Gastrocnemius medialis (tissue), 4 donors: ENCODE measurements at regions of chr17 and their contacts with region 1.

Region 1: DNA sequence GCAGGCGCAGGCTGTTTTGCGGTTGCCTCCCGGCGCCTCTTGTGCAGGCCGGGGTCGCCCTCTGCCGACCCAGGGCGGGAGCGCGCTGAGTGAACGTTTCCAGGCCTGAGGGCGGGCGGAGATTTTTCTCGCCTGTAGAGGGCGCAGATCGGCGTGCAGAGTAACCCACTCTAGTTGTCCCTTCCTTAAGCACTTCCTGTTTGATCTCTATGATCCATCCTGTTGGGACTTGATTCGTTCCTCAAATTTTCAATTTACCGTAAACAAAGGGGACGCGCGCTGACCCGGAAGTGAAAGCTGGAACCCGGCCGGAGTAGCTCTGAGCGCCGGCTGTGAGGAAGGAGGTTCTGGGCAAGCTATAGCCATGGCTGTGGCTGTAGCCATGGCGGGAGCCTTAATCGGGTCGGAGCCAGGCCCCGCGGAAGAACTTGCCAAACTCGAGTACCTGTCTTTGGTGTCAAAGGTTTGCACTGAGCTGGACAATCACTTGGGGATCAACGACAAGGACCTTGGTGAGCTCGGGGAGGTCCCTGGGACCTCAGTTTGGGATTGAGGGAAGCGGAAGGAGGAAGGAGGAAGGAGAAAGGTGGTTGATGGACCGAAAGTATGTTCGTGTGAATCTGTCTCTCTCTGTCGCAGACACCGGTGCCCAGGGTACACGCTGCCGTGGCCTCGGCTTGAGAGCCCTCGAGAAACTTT is at the start of gene DHX8:
- DNase-seq: peak; percentile 96
- ATAC-seq: peak; percentile 98 to 99
- H3K4me3 ChIP-seq: peak within 1 kb of the TSS; percentile 66 to 85 (median 80)
- H3K27ac ChIP-seq: peak within 1 kb of the TSS; percentile 79 to 92 (median 81)
- H3K4me1 ChIP-seq: peaks cover 23 to 24% of the 10 kb centered on the region in 2 donors
- H3K27me3 ChIP-seq: no peaks in the 10 kb centered on the region
- CTCF ChIP-seq: peak; percentile 100
- POLR2A ChIP-seq: peak; percentile 56 to 63
- total RNA-seq, gene DHX8: 24.0 to 30.3 (median 27.2) TPM

Region 2: GRCh38 chr17:43211480-43212402 is 272.1 kb before region 1 on chr17 and contains the start of gene TMEM106A:
- in situ Hi-C with region 1: loop called in 1 of 4 experiments (anchors 25 kb)
- intact Hi-C with region 1: no loop called
- DNase-seq: peak; percentile 44 to 45
- ATAC-seq: peak; percentile 67 to 70
- H3K4me3 ChIP-seq: peak within 1 kb of the TSS; percentile 51 to 63 (median 54)
- H3K27ac ChIP-seq: peak within 1 kb of the TSS; percentile 51 to 75 (median 62)
- H3K4me1 ChIP-seq: no peaks in the 10 kb centered on the region
- H3K27me3 ChIP-seq: no peaks in the 10 kb centered on the region
- CTCF ChIP-seq: peak in 2 of 5 experiments; percentile 13 to 20
- POLR2A ChIP-seq: peak; percentile 4 to 19
- total RNA-seq, gene TMEM106A: 0.32 to 5.6 (median 2.5) TPM

Region 3: GRCh38 chr17:43388359-43389045 is 95.3 kb before region 1 on chr17:
- in situ Hi-C with region 1: loop called in 3 of 4 experiments (anchors 5 kb)
- intact Hi-C with region 1: loop called (anchors 1 kb)
- DNase-seq: peak; percentile 93 to 94
- ATAC-seq: peak; percentile 90 to 93
- H3K4me3 ChIP-seq: peak overlapping the region; percentile 64 to 88 (median 70)
- H3K27ac ChIP-seq: peak overlapping the region; percentile 93 to 100 (median 98)
- H3K4me1 ChIP-seq: peaks cover 0 to 6% of the 10 kb centered on the region in 2 donors
- H3K27me3 ChIP-seq: no peaks in the 10 kb centered on the region
- CTCF ChIP-seq: no peak
- POLR2A ChIP-seq: peak; percentile 92 to 97

Region 4: GRCh38 chr17:43393944-43394482 is 89.8 kb before region 1 on chr17:
- in situ Hi-C with region 1: loop called (anchors 5 kb)
- intact Hi-C with region 1: loop called (anchors 1 kb)
- DNase-seq: peak; percentile 81 to 88
- ATAC-seq: peak; percentile 61 to 64
- H3K4me3 ChIP-seq: peak overlapping the region; percentile 16 to 44 (median 32)
- H3K27ac ChIP-seq: peak overlapping the region; percentile 39 to 77 (median 48)
- H3K4me1 ChIP-seq: peaks cover 3 to 14% of the 10 kb centered on the region in 2 donors
- H3K27me3 ChIP-seq: no peaks in the 10 kb centered on the region
- CTCF ChIP-seq: peak; percentile 91 to 97 (median 94)
- POLR2A ChIP-seq: no peak

Region 5: DNA sequence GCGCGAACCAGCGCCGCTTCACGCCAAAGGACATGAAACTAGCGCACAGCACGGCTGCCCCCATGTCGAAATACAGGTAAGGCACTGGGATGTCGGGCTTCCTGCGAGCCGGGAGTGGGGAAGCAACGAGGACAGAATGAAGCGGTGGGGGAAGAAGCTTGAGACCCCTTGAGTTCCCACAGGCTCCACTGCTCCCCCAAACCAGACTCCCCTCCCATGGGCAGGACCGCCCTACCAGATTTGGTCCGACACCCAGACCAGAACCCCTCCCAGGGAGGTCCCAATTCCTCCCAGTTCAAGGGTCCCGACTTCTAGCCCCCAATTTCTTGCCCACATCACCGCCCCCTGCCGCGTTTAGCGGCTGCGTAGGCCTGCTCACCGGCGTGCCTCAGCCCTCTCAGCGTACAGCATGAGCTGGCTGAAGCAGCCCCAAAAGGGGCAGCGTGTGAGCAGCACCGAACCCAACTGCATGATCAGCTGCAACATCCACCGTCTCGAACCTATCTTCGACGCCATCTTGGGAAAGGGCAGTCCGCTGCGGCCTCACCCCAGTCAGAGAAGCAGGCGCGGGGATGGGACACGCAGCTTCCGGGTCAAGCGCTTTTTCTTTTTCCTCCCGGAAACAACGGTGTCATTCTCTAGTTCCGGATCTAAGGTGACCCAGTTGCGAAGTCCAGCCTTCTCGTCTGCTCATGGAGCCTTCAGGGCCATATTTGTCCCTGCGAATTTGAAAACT is 530.8 kb after region 1 on chr17 and contains the start of gene TMEM101:
- in situ Hi-C with region 1: no loop called
- intact Hi-C with region 1: loop called (anchors 2 kb)
- DNase-seq: peak; percentile 86 to 90
- ATAC-seq: peak; percentile 98 to 99
- H3K4me3 ChIP-seq: peak within 1 kb of the TSS; percentile 79 to 98 (median 86)
- H3K27ac ChIP-seq: peak within 1 kb of the TSS; percentile 71 to 87 (median 82)
- H3K4me1 ChIP-seq: peaks cover 8 to 9% of the 10 kb centered on the region in 2 donors
- H3K27me3 ChIP-seq: no peaks in the 10 kb centered on the region
- CTCF ChIP-seq: no peak
- POLR2A ChIP-seq: no peak
- total RNA-seq, gene TMEM101: 28.8 to 38.3 (median 36.4) TPM